SK-N-SH (cell line): ENCODE measurements at regions of chr11 and their contacts with region 1.

Region 1: GRCh38 chr11:3854977-3855807 is at the start of gene STIM1:
- DNase-seq: peak; percentile 95
- H3K4me3 ChIP-seq: peak within 1 kb of the TSS; percentile 87 to 89
- H3K27ac ChIP-seq: peak within 1 kb of the TSS; percentile 82 to 88
- H3K4me1 ChIP-seq: peaks cover 27 to 28% of the 10 kb centered on the region in 2 experiments; a peak in 3 of 4 replicates
- H3K27me3 ChIP-seq: no peaks in the 10 kb centered on the region
- CTCF ChIP-seq: peak; percentile 83
- EP300 ChIP-seq: peak; percentile 19 to 25; a peak in 2 of 4 replicates
- RAD21 ChIP-seq: peak; percentile 85
- polyA plus RNA-seq, gene STIM1: 21.8 and 29.5 TPM in 2 replicates

Region 2: DNA sequence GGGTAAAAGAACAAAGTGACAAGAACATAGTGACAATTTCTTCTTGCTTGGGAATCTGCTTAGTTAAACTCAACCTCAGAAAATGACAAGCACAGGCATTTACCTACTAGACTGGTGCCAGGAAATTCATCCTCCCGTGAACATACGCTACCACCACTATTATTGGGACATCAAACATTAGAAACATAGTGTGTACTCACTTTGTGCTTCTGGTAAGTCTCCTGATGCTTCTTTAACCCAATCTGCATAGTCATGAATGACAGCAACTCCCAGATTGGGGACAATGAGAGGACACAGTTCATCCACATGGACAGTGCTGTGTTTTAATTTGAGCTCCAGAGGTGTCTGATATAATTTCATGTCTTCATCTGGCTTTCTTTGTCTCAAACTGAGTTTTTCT is 154.8 kb before region 1 on chr11:
- CTCF ChIA-PET with region 1: no interaction called
- POLR2A ChIA-PET with region 1: no interaction called
- DNase-seq: no peak
- H3K4me3 ChIP-seq: no peak overlapping the region
- H3K27ac ChIP-seq: no peak overlapping the region
- H3K4me1 ChIP-seq: no peaks in the 10 kb centered on the region
- H3K27me3 ChIP-seq: no peaks in the 10 kb centered on the region
- CTCF ChIP-seq: no peak
- EP300 ChIP-seq: no peak
- RAD21 ChIP-seq: no peak

Region 3: GRCh38 chr11:3747684-3748083 is 107.5 kb before region 1 on chr11:
- CTCF ChIA-PET with region 1: no interaction called
- POLR2A ChIA-PET with region 1: no interaction called
- DNase-seq: no peak
- H3K4me3 ChIP-seq: no peak overlapping the region
- H3K27ac ChIP-seq: no peak overlapping the region
- H3K4me1 ChIP-seq: no peaks in the 10 kb centered on the region
- H3K27me3 ChIP-seq: no peaks in the 10 kb centered on the region
- CTCF ChIP-seq: no peak
- EP300 ChIP-seq: no peak
- RAD21 ChIP-seq: no peak

Region 4: GRCh38 chr11:3807909-3808860 is 47.0 kb before region 1 on chr11 and contains the start of gene PGAP2:
- CTCF ChIA-PET with region 1: interaction called, 23 read pairs
- POLR2A ChIA-PET with region 1: interaction called, 3 read pairs
- DNase-seq: peak; percentile 90
- H3K4me3 ChIP-seq: peak within 1 kb of the TSS; percentile 70 to 83
- H3K27ac ChIP-seq: peak within 1 kb of the TSS in 1 of 2 experiments; percentile 56; a peak in 2 of 4 replicates
- H3K4me1 ChIP-seq: peaks cover 3 to 8% of the 10 kb centered on the region in 2 experiments; a peak in 3 of 4 replicates
- H3K27me3 ChIP-seq: no peaks in the 10 kb centered on the region
- CTCF ChIP-seq: peak; percentile 74
- EP300 ChIP-seq: no peak
- RAD21 ChIP-seq: peak; percentile 66
- polyA plus RNA-seq, gene PGAP2: 41.3 and 44.1 TPM in 2 replicates

Region 5: GRCh38 chr11:3867209-3868091 is 12.3 kb after region 1 on chr11:
- CTCF ChIA-PET with region 1: interaction called, 21 read pairs
- POLR2A ChIA-PET with region 1: interaction called, 7 read pairs
- DNase-seq: peak; percentile 34
- H3K4me3 ChIP-seq: no peak overlapping the region
- H3K27ac ChIP-seq: peak overlapping the region in 1 of 2 experiments; percentile 78; a peak in 2 of 4 replicates
- H3K4me1 ChIP-seq: peaks cover 0 to 10% of the 10 kb centered on the region in 2 experiments; a peak in 2 of 4 replicates
- H3K27me3 ChIP-seq: no peaks in the 10 kb centered on the region
- CTCF ChIP-seq: no peak
- EP300 ChIP-seq: 0 out of 4 replicates have a peak, but pooled peaks of 1 of the 2 experiments have one; percentile 17
- RAD21 ChIP-seq: no peak

Region 6: DNA sequence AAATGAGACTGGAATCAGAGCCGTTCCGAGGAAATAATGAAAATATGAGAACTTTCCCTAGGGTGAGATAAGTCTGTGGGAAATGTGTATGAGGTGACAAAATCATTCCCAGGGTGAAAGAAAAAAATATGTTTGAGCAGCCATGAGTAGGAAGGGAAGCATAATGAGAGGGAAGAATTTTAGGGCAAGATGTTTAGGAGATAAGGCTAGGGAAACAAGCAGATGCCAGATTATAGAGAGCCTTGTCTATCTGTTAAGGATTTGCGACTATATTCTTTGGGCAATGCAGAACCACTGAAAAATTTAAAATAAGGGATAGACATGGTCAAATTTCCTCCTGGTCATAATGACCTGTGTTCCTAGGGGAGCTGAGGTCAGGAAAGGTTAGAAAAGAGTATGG is 54.7 kb after region 1 on chr11:
- CTCF ChIA-PET with region 1: no interaction called
- POLR2A ChIA-PET with region 1: no interaction called
- DNase-seq: no peak
- H3K4me3 ChIP-seq: no peak overlapping the region
- H3K27ac ChIP-seq: no peak overlapping the region
- H3K4me1 ChIP-seq: peaks cover 2 to 12% of the 10 kb centered on the region in 2 experiments; a peak in 2 of 4 replicates
- H3K27me3 ChIP-seq: no peaks in the 10 kb centered on the region
- CTCF ChIP-seq: no peak
- EP300 ChIP-seq: no peak
- RAD21 ChIP-seq: no peak

Region 7: GRCh38 chr11:3927133-3927796 is 72.1 kb after region 1 on chr11:
- CTCF ChIA-PET with region 1: interaction called, 10 read pairs
- POLR2A ChIA-PET with region 1: no interaction called
- DNase-seq: no peak
- H3K4me3 ChIP-seq: no peak overlapping the region
- H3K27ac ChIP-seq: no peak overlapping the region
- H3K4me1 ChIP-seq: peaks cover 0 to 7% of the 10 kb centered on the region in 2 experiments; a peak in 2 of 4 replicates
- H3K27me3 ChIP-seq: no peaks in the 10 kb centered on the region
- CTCF ChIP-seq: no peak
- EP300 ChIP-seq: no peak
- RAD21 ChIP-seq: peak; percentile 33

Region 8: GRCh38 chr11:4044976-4045646 is 189.9 kb after region 1 on chr11:
- CTCF ChIA-PET with region 1: interaction called, 13 read pairs
- POLR2A ChIA-PET with region 1: no interaction called
- DNase-seq: no peak
- H3K4me3 ChIP-seq: no peak overlapping the region
- H3K27ac ChIP-seq: peak overlapping the region; percentile 3 to 60; a peak in 3 of 4 replicates
- H3K4me1 ChIP-seq: peaks cover 12 to 14% of the 10 kb centered on the region in 2 experiments; a peak in 3 of 4 replicates
- H3K27me3 ChIP-seq: no peaks in the 10 kb centered on the region
- CTCF ChIP-seq: no peak
- EP300 ChIP-seq: 0 out of 4 replicates have a peak, but pooled peaks of 1 of the 2 experiments have one; percentile 22
- RAD21 ChIP-seq: no peak

Region 9: GRCh38 chr11:4156571-4156970 is 301.4 kb after region 1 on chr11:
- CTCF ChIA-PET with region 1: no interaction called
- POLR2A ChIA-PET with region 1: no interaction called
- DNase-seq: no peak
- H3K4me3 ChIP-seq: no peak overlapping the region
- H3K27ac ChIP-seq: no peak overlapping the region
- H3K4me1 ChIP-seq: no peaks in the 10 kb centered on the region; a peak in 1 of 4 replicates
- H3K27me3 ChIP-seq: no peaks in the 10 kb centered on the region; the same call in 1 of the 2 replicates
- CTCF ChIP-seq: no peak
- EP300 ChIP-seq: no peak
- RAD21 ChIP-seq: no peak

Region 10: GRCh38 chr11:4187055-4187988 is 332.1 kb after region 1 on chr11:
- CTCF ChIA-PET with region 1: interaction called, 10 read pairs
- POLR2A ChIA-PET with region 1: no interaction called
- DNase-seq: peak; percentile 94
- H3K4me3 ChIP-seq: peak overlapping the region; percentile 58 to 66
- H3K27ac ChIP-seq: no peak overlapping the region
- H3K4me1 ChIP-seq: peaks cover 0 to 3% of the 10 kb centered on the region in 2 experiments; a peak in 1 of 4 replicates
- H3K27me3 ChIP-seq: peaks cover 23% of the 10 kb centered on the region; the same call in 1 of the 2 replicates
- CTCF ChIP-seq: peak; percentile 74
- EP300 ChIP-seq: no peak; a peak in 1 of 4 replicates
- RAD21 ChIP-seq: peak; percentile 92